PC-3 (cell line): ENCODE measurements at regions of chr5 and their contacts with region 1.

Region 1: DNA sequence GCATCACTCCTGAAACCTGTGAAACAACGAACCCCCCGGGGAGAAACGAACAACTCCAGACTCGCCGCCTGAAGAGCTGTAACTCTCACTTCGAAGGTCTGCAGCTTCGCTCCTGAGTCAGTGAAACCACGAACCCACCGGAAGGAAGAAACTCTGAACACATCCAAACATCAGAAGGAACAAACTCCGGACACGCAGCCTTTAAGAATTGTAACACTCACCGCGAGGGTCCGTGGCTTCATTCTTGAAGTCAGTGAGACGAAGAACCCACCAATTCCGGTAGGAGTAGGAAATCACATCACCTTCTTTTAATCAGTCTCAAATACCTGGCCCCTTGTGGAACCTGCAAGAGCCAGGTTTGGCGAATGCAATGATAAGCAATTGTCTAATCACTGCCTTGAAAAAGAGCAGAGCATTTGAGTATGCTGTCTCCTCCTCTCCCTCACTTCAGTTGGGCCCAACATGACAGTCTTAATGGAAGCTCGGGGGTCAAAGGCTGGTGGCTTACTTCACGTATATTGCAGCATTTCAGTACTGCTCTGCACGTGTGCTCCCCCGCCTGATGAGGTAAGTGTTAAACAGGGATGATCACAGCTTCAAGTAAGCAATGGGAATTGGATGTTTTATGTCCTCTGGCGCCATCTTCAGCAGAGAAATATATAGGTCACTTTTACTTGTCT is 473 bp downstream of the IRGM start:
- DNase-seq: peak; percentile 79
- ATAC-seq: peak; percentile 91
- H3K4me3 ChIP-seq: no peak overlapping the region
- H3K27ac ChIP-seq: no peak overlapping the region
- H3K4me1 ChIP-seq: no peaks in the 10 kb centered on the region
- H3K27me3 ChIP-seq: no peaks in the 10 kb centered on the region
- CTCF ChIP-seq: peak; percentile 87

Region 2: DNA sequence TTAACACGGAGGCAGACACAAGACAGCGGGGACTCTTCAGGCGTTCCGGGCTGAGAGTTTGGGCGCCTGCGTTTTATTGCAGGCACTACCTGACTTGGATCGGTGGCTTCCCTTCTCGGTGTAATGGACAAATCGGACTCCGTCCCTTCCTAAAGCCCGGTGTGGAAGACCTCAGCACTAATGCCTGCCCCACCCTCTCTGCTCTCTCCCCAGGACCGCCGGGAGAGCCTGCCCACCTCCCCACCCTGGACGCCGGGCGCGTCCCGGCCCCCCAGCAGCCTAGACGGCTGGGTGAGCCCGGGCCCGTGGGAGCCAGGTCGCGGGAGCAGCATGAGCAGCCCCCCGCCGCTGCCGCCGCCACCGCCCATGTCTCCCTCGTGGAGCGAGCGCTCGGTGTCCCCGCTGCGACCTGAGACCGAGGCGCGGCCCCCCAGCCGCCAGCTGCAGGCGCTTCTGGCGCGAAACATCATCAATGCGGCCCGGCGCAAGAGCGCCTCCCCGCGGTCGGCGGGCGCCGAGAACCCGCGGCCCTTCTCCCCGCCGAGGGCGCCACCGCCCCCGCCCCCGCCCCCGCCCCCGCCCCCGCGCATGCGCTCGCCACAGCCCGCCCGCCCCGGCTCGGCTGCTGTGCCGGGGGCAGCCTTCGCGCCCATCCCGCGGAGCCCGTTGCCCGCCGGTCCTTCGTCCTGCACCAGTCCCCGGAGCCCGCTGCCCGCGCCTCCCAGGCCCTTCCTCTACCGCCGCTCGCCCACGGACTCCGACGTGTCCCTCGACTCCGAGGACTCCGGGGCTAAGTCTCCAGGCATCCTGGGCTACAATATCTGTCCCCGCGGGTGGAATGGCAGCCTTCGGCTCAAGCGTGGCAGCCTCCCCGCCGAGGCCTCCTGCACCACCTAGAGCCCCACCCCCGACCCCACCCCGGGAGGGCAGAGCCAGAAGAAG is 190.3 kb before region 1 on chr5:
- CTCF ChIA-PET with region 1: no interaction called
- POLR2A ChIA-PET with region 1: no interaction called
- intact Hi-C with region 1: loop called (anchors 10 kb)
- DNase-seq: peak; percentile 78
- ATAC-seq: peak; percentile 76
- H3K4me3 ChIP-seq: peak overlapping the region; percentile 73
- H3K27ac ChIP-seq: no peak overlapping the region
- H3K4me1 ChIP-seq: peaks cover 6% of the 10 kb centered on the region; the same call in 1 of the 2 replicates
- H3K27me3 ChIP-seq: no peaks in the 10 kb centered on the region
- CTCF ChIP-seq: peak; percentile 56